Heart left ventricle (tissue), 16 donors: ENCODE measurements at regions of chr21 and their contacts with region 1.

Region 1: GRCh38 chr21:37563641-37564340 is 197.2 kb downstream of the DYRK1A start:
- DNase-seq: peak; percentile 94 to 97 (median 96)
- ATAC-seq: peak; percentile 94 to 96 (median 95)
- H3K4me3 ChIP-seq: peak overlapping the region; percentile 57 to 89 (median 74)
- H3K27ac ChIP-seq: peak overlapping the region; percentile 81 to 97 (median 92)
- H3K4me1 ChIP-seq: peaks cover 0 to 31% (median 13%) of the 10 kb centered on the region in 12 donors
- H3K27me3 ChIP-seq: no peaks in the 10 kb centered on the region
- CTCF ChIP-seq: peak in 11 of 12 donors; percentile 26 to 69 (median 42)
- POLR2A ChIP-seq: peak in 1 of 2 donors; percentile 85

Region 2: GRCh38 chr21:37208056-37208721 is 355.6 kb before region 1 on chr21:
- intact Hi-C with region 1: loop called in 1 of 10 experiments (anchors 10 kb)
- DNase-seq: peak; percentile 78 to 91 (median 87)
- ATAC-seq: peak; percentile 91 to 95 (median 94)
- H3K4me3 ChIP-seq: peak overlapping the region in 8 of 12 donors; percentile 1 to 37 (median 22)
- H3K27ac ChIP-seq: peak overlapping the region; percentile 68 to 96 (median 88)
- H3K4me1 ChIP-seq: peaks cover 0 to 35% (median 22%) of the 10 kb centered on the region in 12 donors
- H3K27me3 ChIP-seq: no peaks in the 10 kb centered on the region
- CTCF ChIP-seq: no peak
- POLR2A ChIP-seq: no peak

Region 3: DNA sequence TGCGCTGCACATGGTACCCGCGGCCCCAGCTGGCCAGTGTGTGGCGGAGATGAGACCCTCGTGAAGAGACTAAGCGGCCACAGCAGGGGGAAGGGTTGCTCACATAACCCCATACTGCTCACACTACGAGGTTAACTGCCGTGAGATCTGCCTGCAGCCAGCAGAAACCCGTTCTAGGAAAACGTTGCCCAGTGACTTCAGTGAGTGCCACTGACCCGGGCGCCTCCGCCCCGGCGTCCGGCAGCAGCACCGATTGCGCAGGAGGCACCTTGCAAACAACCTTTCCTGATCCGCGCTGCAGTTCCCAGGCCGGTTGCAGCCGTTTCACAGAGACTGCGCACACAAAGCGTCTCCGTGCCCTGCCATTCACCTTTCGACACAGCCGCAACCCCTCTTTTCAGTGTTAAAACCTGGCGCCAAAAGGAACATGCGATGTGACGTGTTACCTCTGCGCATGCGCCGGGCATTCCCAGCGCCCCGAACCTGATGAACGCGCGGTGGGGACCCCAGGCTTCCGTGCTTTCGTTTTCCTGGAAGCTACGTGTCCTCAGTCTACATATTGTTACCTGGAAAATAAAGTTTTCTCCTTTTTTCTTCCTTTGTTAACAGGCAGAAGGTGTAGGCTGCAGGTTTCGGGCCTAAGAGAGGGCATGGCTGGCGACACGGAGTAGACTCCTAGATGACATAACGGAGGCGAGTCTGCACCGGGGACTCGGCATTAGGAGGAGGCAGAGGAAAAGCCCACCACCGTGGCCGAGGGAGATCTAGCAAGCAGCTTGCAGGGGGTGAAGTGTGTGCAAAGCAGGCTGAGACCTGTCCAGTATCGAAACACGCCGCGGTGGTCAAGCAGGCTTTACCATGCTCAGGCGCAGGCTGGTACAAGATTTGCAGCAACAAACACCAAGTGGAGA is 305.6 kb before region 1 on chr21:
- intact Hi-C with region 1: loop called in 2 of 10 experiments (anchors 10 kb)
- DNase-seq: peak; percentile 58 to 73 (median 61)
- ATAC-seq: peak; percentile 53 to 71 (median 62)
- H3K4me3 ChIP-seq: peak overlapping the region; percentile 15 to 68 (median 55)
- H3K27ac ChIP-seq: peak overlapping the region in 11 of 12 donors; percentile 50 to 88 (median 68)
- H3K4me1 ChIP-seq: peaks cover 4 to 43% (median 17%) of the 10 kb centered on the region in 12 donors
- H3K27me3 ChIP-seq: no peaks in the 10 kb centered on the region
- CTCF ChIP-seq: no peak
- POLR2A ChIP-seq: no peak

Region 4: GRCh38 chr21:37366482-37367316 is 197.1 kb before region 1 on chr21 and contains the start of gene DYRK1A:
- intact Hi-C with region 1: loop called in 8 of 10 experiments (anchors 1 to 10 kb)
- DNase-seq: peak; percentile 98 to 99 (median 99)
- ATAC-seq: peak; percentile 91 to 98 (median 96)
- H3K4me3 ChIP-seq: peak within 1 kb of the TSS; percentile 77 to 96 (median 88)
- H3K27ac ChIP-seq: peak within 1 kb of the TSS; percentile 98 to 100 (median 100)
- H3K4me1 ChIP-seq: peaks cover 9 to 45% (median 35%) of the 10 kb centered on the region in 12 donors
- H3K27me3 ChIP-seq: no peaks in the 10 kb centered on the region
- CTCF ChIP-seq: peak in 2 of 12 donors; percentile 7 to 16
- POLR2A ChIP-seq: peak; percentile 19 to 59
- total RNA-seq, gene DYRK1A: 59.3 to 96.6 (median 72.1) TPM

Region 5: DNA sequence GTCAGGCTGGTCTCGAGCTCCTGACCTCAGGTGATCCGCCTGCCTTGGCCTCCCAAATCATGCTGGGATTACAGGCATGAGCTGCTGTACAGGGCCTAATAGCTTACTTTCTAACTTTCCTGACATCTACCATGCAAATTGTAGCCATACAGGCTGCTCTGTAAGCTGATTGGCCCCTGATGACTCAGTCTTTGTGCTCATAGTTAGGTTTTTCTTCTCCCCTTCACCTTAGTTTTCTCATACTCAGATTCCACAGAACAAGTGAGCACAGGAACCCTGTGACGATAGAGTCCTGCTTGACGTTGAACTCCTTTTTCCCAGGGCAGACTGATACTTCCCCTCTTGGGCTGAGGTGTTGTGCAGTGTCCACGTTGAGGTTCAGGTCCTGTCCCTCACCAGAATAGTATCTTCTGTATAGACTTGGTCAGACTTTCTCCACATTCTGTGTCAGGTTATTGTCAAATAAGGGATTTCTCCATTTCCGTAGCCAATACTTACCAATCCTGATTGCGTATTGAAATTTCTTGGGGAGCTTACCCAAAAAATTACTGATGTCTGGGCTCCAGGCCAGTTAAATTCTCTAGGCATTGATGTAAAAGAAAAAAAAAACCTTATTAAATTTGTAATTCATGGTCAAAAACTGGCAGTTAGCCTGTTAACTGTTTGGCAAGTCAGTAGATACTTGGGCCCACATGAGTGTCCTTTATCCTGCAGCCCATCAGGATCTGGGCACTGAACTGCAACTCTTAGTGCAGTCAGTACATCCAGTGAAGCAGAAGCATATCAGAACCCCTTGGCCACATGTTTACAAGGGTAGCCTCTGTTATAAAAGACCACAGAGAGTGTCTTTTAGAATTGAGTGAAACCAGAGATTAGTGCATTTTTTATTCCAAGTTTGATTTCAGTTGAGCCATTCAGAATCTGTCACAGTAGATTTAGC is 79.0 kb before region 1 on chr21:
- intact Hi-C with region 1: loop called in 2 of 10 experiments (anchors 5 to 10 kb)
- DNase-seq: no peak
- ATAC-seq: peak; percentile 36 to 65 (median 58)
- H3K4me3 ChIP-seq: no peak overlapping the region
- H3K27ac ChIP-seq: peak overlapping the region in 1 of 12 donors; percentile 37
- H3K4me1 ChIP-seq: peaks cover 0 to 17% (median 5%) of the 10 kb centered on the region in 12 donors
- H3K27me3 ChIP-seq: no peaks in the 10 kb centered on the region
- CTCF ChIP-seq: no peak
- POLR2A ChIP-seq: no peak

Region 6: DNA sequence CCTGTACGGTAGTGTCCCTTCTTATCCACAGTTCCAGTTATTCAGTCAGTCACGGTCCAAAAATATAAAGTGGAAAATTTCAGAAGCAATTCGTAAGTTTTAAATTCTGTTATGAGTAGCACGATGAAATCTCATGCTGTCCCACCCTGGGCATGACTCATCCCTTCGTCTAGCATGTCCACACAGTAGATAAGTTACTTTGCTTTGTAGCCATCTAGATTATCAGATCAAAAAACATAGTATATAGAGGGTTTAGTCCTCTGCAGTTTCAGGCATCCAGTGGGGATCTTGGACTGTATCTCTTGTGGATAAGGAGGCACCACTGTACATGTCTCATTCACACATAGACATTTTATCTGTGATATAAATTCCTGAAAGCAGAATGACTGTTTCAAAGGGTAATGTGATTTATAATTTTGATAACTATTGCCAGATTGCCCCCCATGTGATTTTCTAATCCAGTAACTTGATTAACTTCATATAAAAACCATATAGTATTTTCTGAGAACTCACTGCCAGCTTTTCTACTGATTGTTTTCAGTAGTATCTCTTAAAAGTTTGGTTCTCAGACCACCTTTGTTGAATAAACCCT is 53.9 kb before region 1 on chr21:
- intact Hi-C with region 1: loop called in 1 of 10 experiments (anchors 10 kb)
- DNase-seq: no peak
- ATAC-seq: no peak
- H3K4me3 ChIP-seq: no peak overlapping the region
- H3K27ac ChIP-seq: no peak overlapping the region
- H3K4me1 ChIP-seq: peaks cover 0 to 8% (median 0%) of the 10 kb centered on the region in 12 donors
- H3K27me3 ChIP-seq: no peaks in the 10 kb centered on the region
- CTCF ChIP-seq: no peak
- POLR2A ChIP-seq: no peak